Psoas muscle (tissue), 8 donors: ENCODE measurements at regions of chr14 and their contacts with region 1.

Region 1: GRCh38 chr14:69879175-69880043 is at the start of gene SMOC1:
- DNase-seq: peak; percentile 66 to 87
- ATAC-seq: peak; percentile 93 to 97 (median 95)
- H3K4me3 ChIP-seq: peak within 1 kb of the TSS; percentile 75
- H3K27ac ChIP-seq: peak within 1 kb of the TSS; percentile 89
- H3K4me1 ChIP-seq: peaks cover 23% of the 10 kb centered on the region
- H3K27me3 ChIP-seq: no peaks in the 10 kb centered on the region
- CTCF ChIP-seq: no peak
- total RNA-seq, gene SMOC1: 4.2 to 10.1 (median 5.2) TPM

Region 2: GRCh38 chr14:69803753-69804152 is 75.7 kb before region 1 on chr14:
- intact Hi-C with region 1: no loop called
- DNase-seq: no peak
- ATAC-seq: no peak
- H3K4me3 ChIP-seq: no peak overlapping the region
- H3K27ac ChIP-seq: no peak overlapping the region
- H3K4me1 ChIP-seq: no peaks in the 10 kb centered on the region
- H3K27me3 ChIP-seq: no peaks in the 10 kb centered on the region
- CTCF ChIP-seq: no peak

Region 3: GRCh38 chr14:69852531-69853321 is 26.7 kb before region 1 on chr14:
- intact Hi-C with region 1: loop called in 1 of 2 experiments (anchors 2 kb)
- DNase-seq: no peak
- ATAC-seq: no peak
- H3K4me3 ChIP-seq: no peak overlapping the region
- H3K27ac ChIP-seq: no peak overlapping the region
- H3K4me1 ChIP-seq: peaks cover 20% of the 10 kb centered on the region
- H3K27me3 ChIP-seq: no peaks in the 10 kb centered on the region
- CTCF ChIP-seq: no peak

Region 4: DNA sequence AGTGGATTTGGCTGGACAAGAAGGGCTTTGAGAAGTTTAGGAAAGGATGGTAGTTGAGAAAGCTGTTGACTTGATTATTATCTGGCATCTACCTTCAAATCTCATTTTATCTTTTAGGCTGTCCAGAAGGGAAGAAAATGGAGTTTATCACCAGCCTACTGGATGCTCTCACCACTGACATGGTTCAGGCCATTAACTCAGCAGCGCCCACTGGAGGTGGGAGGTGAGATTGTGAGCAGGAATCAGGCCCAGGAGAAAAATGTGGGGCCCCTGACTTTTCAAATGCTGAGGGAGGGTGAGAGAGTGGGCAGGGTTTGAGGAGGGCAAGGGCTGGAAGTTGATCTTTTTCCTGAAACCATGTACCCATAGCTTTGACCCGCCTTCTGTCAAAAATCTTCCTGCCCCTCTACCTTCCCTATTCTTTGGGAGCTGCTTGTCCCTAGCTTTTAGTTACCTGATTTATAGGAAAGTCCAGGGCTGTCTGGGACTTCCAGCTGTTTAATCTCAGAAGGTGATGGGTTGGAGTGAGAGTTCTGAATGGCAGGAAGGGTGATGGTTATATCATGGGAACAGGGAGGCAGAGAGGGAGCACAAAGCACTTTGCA is 134.0 kb after region 1 on chr14:
- intact Hi-C with region 1: loop called in 1 of 2 experiments (anchors 5 kb)
- DNase-seq: no peak
- ATAC-seq: peak in 1 of 4 donors; percentile 45
- H3K4me3 ChIP-seq: no peak overlapping the region
- H3K27ac ChIP-seq: no peak overlapping the region
- H3K4me1 ChIP-seq: no peaks in the 10 kb centered on the region
- H3K27me3 ChIP-seq: no peaks in the 10 kb centered on the region
- CTCF ChIP-seq: peak; percentile 59

Region 5: DNA sequence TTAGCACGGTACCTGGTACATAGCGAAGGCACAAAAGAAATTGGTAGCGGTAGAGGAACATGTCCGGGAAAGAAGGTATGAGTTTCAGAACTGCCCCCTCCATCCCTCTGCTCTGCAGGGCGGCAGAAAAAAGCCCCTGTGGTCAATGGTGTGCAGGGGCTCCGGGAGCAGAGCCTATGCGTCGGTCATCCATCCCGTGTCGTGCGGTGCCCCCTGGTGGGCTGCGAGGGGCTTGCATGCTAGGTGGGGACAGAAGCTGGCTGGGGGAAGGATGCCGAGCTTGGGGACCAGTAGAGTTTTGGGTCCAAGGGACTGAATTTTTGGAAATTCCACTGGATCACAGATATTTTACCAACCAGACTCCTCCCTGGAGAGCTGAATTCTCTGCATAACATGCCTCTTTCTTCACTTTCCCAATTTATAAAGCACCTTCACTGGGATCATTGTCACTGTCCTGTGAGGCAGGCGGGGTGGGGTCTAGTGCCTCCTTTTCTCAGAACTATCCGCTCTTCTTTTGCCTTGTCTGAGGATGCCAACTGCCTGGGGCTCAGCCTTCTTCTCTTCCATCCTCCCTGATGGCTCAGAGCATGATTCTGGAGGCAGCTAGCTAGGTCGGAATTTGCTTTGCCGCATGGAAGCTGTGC is 148.5 kb after region 1 on chr14:
- intact Hi-C with region 1: loop called (anchors 5 kb)
- DNase-seq: peak; percentile 76 to 88
- ATAC-seq: peak; percentile 89 to 96 (median 92)
- H3K4me3 ChIP-seq: no peak overlapping the region
- H3K27ac ChIP-seq: no peak overlapping the region
- H3K4me1 ChIP-seq: no peaks in the 10 kb centered on the region
- H3K27me3 ChIP-seq: no peaks in the 10 kb centered on the region
- CTCF ChIP-seq: peak; percentile 96